Ascending aorta (tissue), 2 donors: ENCODE measurements at regions of chr7 and their contacts with region 1.

Region 1: DNA sequence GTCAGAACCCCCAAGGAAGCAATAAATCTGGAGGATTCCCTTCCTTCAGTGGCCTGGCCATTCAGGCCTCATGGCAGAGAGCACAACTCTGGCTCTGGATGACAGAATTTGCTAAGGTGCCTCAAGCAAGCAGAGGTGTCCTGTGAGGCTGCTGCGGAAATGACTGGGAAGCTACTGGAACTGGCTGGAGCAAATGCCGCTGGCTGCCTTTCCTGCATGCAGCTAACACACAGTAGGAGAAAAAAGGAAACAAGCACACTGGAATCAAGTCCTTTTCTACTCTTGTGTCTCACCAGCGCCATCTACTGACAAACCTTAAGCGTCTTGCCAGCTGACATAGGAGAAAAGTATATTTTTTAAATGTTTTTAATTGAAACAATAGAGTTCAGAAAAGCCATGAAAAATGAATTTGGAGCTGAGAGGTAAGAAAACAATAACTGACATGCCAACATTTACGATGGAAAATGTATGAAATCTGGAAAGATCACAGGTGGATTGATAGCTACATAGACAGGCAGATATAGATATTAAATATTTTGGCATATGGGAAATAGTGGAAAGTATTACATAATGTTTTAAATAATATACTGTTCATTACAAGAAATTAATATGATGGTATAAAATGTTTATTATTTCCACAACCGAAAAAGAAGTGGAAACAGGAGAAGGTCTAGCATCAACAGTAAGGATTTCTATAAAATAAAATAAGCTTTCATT is 951.6 kb downstream of the ANKRD7 start:
- DNase-seq: peak in 1 of 2 donors; percentile 66
- H3K4me3 ChIP-seq: no peak overlapping the region
- H3K27ac ChIP-seq: no peak overlapping the region
- H3K4me1 ChIP-seq: no peaks in the 10 kb centered on the region
- H3K27me3 ChIP-seq: no peaks in the 10 kb centered on the region
- CTCF ChIP-seq: peak in 2 of 3 experiments; percentile 68 to 79

Region 2: GRCh38 chr7:118259115-118259514 is 917.0 kb before region 1 on chr7:
- intact Hi-C with region 1: loop called (anchors 5 kb)
- DNase-seq: no peak
- H3K4me3 ChIP-seq: no peak overlapping the region
- H3K27ac ChIP-seq: no peak overlapping the region
- H3K4me1 ChIP-seq: no peaks in the 10 kb centered on the region
- H3K27me3 ChIP-seq: no peaks in the 10 kb centered on the region
- CTCF ChIP-seq: peak in 1 of 3 experiments; percentile 27

Region 3: GRCh38 chr7:118352854-118353453 is 823.1 kb before region 1 on chr7:
- intact Hi-C with region 1: loop called (anchors 2 kb)
- DNase-seq: no peak
- H3K4me3 ChIP-seq: no peak overlapping the region
- H3K27ac ChIP-seq: no peak overlapping the region
- H3K4me1 ChIP-seq: no peaks in the 10 kb centered on the region
- H3K27me3 ChIP-seq: no peaks in the 10 kb centered on the region
- CTCF ChIP-seq: peak in 2 of 3 experiments; percentile 5 to 19

Region 4: GRCh38 chr7:118731854-118732253 is 444.2 kb before region 1 on chr7:
- intact Hi-C with region 1: loop called (anchors 10 kb)
- DNase-seq: no peak
- H3K4me3 ChIP-seq: no peak overlapping the region
- H3K27ac ChIP-seq: no peak overlapping the region
- H3K4me1 ChIP-seq: no peaks in the 10 kb centered on the region
- H3K27me3 ChIP-seq: no peaks in the 10 kb centered on the region
- CTCF ChIP-seq: no peak

Region 5: GRCh38 chr7:118918556-118918955 is 257.5 kb before region 1 on chr7:
- intact Hi-C with region 1: loop called (anchors 2 kb)
- DNase-seq: no peak
- H3K4me3 ChIP-seq: no peak overlapping the region
- H3K27ac ChIP-seq: no peak overlapping the region
- H3K4me1 ChIP-seq: no peaks in the 10 kb centered on the region
- H3K27me3 ChIP-seq: no peaks in the 10 kb centered on the region
- CTCF ChIP-seq: peak in 1 of 3 experiments; percentile 45